Panc1 (cell line): ENCODE measurements at regions of chr11 and their contacts with region 1.

Region 1: DNA sequence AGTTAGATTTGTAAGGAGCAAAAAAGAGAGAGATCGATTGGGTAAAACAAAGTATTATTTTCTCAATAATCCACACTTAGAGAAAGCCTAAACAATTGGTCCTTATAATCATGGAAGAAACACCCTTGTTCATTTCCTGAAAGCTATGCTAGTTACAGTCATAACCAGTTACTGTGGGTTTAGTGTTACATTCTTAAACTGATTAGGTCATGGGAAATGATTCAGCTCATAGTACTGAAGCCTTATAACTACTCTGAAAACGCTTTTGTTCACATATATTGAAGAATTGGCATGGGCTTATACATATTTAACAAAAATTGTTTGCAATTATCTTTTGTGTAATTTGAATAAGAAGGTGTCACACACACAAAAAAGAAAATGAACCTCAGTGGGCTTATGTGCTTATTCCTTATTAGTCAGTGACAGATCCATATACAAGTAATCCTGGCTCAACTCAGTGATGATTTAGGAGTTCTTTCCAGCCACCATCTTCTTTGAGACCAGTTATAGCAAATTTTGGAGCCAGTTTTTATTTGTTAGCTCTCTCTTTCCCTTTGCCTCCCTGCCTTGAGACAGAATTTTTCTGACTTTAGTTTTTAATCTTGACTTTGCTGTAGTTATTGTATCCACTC is 198.5 kb upstream of the CTSC start:
- DNase-seq: peak; percentile 84
- ATAC-seq: peak; percentile 92
- H3K4me3 ChIP-seq: no peak overlapping the region
- H3K27ac ChIP-seq: no peak overlapping the region
- H3K4me1 ChIP-seq: no peaks in the 10 kb centered on the region
- H3K27me3 ChIP-seq: no peaks in the 10 kb centered on the region
- CTCF ChIP-seq: no peak

Region 2: GRCh38 chr11:87180742-87181141 is 1355.3 kb before region 1 on chr11:
- CTCF ChIA-PET with region 1: no interaction called
- POLR2A ChIA-PET with region 1: no interaction called
- in situ Hi-C with region 1: no loop called
- intact Hi-C with region 1: no loop called
- DNase-seq: no peak
- ATAC-seq: no peak
- H3K4me3 ChIP-seq: no peak overlapping the region
- H3K27ac ChIP-seq: no peak overlapping the region
- H3K4me1 ChIP-seq: peaks cover 9% of the 10 kb centered on the region
- H3K27me3 ChIP-seq: no peaks in the 10 kb centered on the region
- CTCF ChIP-seq: no peak

Region 3: DNA sequence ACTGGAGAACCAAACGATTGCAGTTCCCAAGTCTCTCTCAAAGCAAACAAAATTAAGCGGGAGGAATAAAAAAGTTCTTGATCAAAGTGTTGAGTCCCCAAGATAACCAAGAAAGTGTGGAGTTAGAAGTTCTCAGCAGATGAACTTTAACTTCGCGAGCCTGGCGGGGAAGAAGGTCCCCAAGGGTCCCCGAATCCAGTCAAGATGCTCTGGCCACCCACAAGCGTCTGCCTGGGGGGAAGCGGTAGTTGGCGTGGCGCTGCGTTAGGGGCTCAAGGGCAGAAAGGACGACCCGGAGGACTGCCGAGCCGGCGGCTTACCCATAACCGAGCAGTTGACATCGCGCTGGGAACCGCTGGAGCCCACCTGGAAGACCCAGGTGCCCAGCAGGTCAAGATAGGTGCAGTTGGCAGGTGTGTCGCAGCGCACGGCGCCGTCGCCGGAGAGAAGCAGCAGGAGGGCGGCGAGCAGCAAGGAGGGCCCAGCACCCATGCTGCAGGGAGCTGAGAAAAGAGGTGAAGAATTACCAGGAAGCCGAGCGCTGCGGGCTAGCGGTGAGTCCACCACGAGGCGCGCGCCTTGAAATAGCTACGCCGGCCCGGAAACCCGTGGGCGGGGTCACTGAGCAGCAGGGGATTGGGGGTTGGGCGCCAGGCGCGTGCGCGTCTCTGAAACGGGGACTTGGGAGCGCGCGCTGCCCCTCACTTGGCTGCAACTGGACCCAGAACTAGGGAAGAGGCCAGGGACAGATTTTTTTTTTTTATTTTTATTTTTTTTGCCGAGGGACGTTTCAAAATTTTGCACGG is 198.6 kb before region 1 on chr11 and contains the start of gene CTSC:
- CTCF ChIA-PET with region 1: no interaction called
- POLR2A ChIA-PET with region 1: no interaction called
- in situ Hi-C with region 1: no loop called
- intact Hi-C with region 1: loop called (anchors 5 kb)
- DNase-seq: peak; percentile 50
- ATAC-seq: peak; percentile 98
- H3K4me3 ChIP-seq: peak within 1 kb of the TSS; percentile 86 to 94
- H3K27ac ChIP-seq: peak within 1 kb of the TSS; percentile 95
- H3K4me1 ChIP-seq: peaks cover 10% of the 10 kb centered on the region
- H3K27me3 ChIP-seq: no peaks in the 10 kb centered on the region
- CTCF ChIP-seq: no peak
- total RNA-seq, gene CTSC: 80.2 TPM

Region 4: GRCh38 chr11:88555018-88555828 is 19.2 kb after region 1 on chr11:
- CTCF ChIA-PET with region 1: interaction called, 13 read pairs
- POLR2A ChIA-PET with region 1: no interaction called
- in situ Hi-C with region 1: no loop called
- intact Hi-C with region 1: no loop called
- DNase-seq: peak; percentile 93
- ATAC-seq: peak; percentile 90
- H3K4me3 ChIP-seq: no peak overlapping the region
- H3K27ac ChIP-seq: no peak overlapping the region
- H3K4me1 ChIP-seq: peaks cover 5% of the 10 kb centered on the region; the same call in 1 of the 2 replicates
- H3K27me3 ChIP-seq: no peaks in the 10 kb centered on the region
- CTCF ChIP-seq: no peak